Dendritic cell treated with granulocyte-macrophage colony-stimulating factor and Interleukin-4, amounts not matched to agents 40 ng/mL and 50 ng/mL, for 4 days (primary cell): ENCODE measurements at regions of chr14 and their contacts with region 1.

Region 1: DNA sequence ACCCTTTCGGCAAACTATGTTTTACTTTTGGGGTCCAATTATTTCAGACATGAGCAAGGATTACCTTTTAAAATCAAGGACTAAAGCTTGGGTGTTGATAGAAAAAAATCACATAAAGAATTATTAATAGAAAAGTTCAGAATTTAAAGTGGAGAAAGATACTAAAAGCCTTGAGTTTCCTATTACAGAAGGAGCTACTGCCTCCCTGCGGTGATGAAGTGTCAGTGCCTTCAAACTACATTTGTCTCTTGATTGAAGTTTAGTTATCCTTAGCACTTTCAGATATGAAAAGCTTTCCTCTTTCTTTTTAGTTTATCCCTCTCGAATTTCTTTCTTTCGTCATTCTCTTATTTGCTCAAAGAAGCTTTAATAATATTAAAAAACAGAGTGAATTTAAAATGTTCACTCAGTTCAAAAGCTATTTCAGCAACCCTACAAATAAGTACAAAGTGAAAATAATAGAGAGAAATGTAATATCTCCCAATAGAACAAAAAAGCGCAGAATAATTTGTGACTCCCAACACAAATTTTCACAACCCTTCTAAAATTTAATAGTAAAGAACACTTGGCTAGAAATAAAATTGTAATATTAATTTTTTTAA is 87.6 kb downstream of the SEC23A start:
- H3K4me3 Mint-ChIP-seq: no peak overlapping the region
- H3K27ac Mint-ChIP-seq: no peak overlapping the region
- H3K4me1 Mint-ChIP-seq: no peaks in the 10 kb centered on the region
- H3K27me3 Mint-ChIP-seq: no peaks in the 10 kb centered on the region

Region 2: DNA sequence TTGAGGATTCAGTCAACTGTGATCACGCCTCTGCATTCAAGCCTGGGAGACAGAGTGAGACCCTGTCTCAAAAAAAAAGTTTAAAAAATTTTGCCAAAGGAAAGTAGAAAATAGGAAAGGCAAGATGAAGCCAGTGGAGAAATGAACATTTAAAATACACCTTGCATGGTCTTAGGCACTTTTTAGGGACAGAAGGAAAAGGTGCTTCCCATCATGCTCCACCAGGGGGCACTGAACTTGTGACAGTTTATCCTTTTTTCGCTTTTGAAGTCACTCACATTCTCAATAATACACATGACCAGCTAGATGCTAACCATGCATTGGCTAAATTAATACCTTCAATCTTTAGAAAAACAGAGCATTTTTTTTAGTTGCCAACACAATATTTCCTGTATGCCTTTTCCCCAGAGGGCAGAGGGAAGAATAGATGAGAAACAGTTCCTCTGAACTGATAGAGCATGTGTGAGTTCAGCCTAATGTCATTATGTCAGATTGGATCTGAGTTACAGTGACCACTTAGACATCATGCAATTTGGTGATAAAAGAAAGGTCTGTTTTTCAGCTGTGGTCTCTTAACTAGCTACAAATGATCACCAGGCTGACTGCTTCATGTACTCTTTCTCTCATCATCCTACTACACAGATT is 1029.5 kb before region 1 on chr14:
- intact Hi-C with region 1: loop called (anchors 5 kb)
- H3K4me3 Mint-ChIP-seq: no peak overlapping the region
- H3K27ac Mint-ChIP-seq: no peak overlapping the region
- H3K4me1 Mint-ChIP-seq: no peaks in the 10 kb centered on the region
- H3K27me3 Mint-ChIP-seq: no peaks in the 10 kb centered on the region

Region 3: GRCh38 chr14:38721822-38722431 is 293.5 kb before region 1 on chr14:
- intact Hi-C with region 1: loop called (anchors 1 kb)
- H3K4me3 Mint-ChIP-seq: no peak overlapping the region
- H3K27ac Mint-ChIP-seq: no peak overlapping the region
- H3K4me1 Mint-ChIP-seq: no peaks in the 10 kb centered on the region
- H3K27me3 Mint-ChIP-seq: no peaks in the 10 kb centered on the region

Region 4: DNA sequence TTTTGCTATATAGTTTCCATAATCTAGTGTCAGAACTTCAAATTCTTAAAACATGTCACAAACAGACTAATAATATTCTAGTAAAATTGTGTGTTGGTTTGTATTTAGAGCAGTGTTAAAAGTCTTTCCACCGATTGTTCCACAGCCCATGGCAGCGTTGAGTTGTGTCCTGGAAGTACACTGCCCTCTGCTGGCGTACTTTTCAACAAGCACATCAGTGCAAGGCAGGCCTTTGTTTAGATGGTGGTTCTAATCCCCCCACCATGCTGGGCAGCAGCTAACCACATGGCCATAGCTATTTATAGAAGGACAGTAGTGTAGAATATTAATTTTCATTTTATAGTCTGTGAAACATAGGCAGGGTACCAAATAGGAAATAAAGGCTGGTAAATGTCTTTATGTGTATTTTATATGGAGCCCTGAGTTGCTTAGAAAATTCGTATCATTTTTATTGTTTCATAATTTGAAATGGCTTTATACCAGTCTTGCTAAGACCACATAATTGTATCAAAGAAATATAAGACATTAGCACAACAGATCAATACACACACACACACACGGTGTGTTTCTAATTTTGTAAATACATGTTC is 147.8 kb before region 1 on chr14:
- intact Hi-C with region 1: loop called (anchors 5 kb)
- H3K4me3 Mint-ChIP-seq: no peak overlapping the region
- H3K27ac Mint-ChIP-seq: no peak overlapping the region
- H3K4me1 Mint-ChIP-seq: peaks cover 12% of the 10 kb centered on the region
- H3K27me3 Mint-ChIP-seq: no peaks in the 10 kb centered on the region

Region 5: GRCh38 chr14:39083127-39083526 is 67.7 kb after region 1 on chr14:
- intact Hi-C with region 1: no loop called
- H3K4me3 Mint-ChIP-seq: no peak overlapping the region
- H3K27ac Mint-ChIP-seq: no peak overlapping the region
- H3K4me1 Mint-ChIP-seq: no peaks in the 10 kb centered on the region
- H3K27me3 Mint-ChIP-seq: no peaks in the 10 kb centered on the region